Psoas muscle (tissue), 8 donors: ENCODE measurements at regions of chr3 and their contacts with region 1.

Region 1: GRCh38 chr3:59756934-59757333 is 707.1 kb upstream of the CFAP20DC start:
- DNase-seq: no peak
- ATAC-seq: no peak
- H3K4me3 ChIP-seq: no peak overlapping the region
- H3K27ac ChIP-seq: no peak overlapping the region
- H3K4me1 ChIP-seq: no peaks in the 10 kb centered on the region
- H3K27me3 ChIP-seq: no peaks in the 10 kb centered on the region
- CTCF ChIP-seq: no peak

Region 2: DNA sequence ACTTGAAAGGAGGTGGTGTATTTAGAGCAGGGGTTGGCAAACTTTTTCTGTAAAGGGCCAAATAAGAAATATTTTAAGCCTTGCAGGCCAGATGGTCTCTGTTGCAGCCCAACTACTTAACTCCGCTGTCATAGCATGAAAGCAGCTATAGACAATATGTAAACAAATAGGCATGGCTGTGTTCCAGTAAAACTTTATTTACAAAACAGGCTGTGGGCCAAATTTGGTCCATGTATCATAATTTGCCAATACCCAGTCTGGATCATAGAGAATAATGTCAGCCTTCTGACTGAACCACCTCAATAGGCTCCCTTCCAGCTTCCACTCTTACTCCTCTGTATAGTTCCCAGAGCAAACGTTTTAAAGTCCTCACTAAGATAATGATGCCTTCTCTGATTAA is 68.3 kb before region 1 on chr3:
- intact Hi-C with region 1: no loop called
- DNase-seq: no peak
- ATAC-seq: no peak
- H3K4me3 ChIP-seq: no peak overlapping the region
- H3K27ac ChIP-seq: no peak overlapping the region
- H3K4me1 ChIP-seq: no peaks in the 10 kb centered on the region
- H3K27me3 ChIP-seq: no peaks in the 10 kb centered on the region
- CTCF ChIP-seq: no peak

Region 3: GRCh38 chr3:59774634-59775033 is 17.7 kb after region 1 on chr3:
- intact Hi-C with region 1: loop called in 1 of 2 experiments (anchors 1 kb)
- DNase-seq: no peak
- ATAC-seq: no peak
- H3K4me3 ChIP-seq: no peak overlapping the region
- H3K27ac ChIP-seq: no peak overlapping the region
- H3K4me1 ChIP-seq: no peaks in the 10 kb centered on the region
- H3K27me3 ChIP-seq: no peaks in the 10 kb centered on the region
- CTCF ChIP-seq: no peak

Region 4: GRCh38 chr3:59873576-59874230 is 116.8 kb after region 1 on chr3:
- intact Hi-C with region 1: no loop called
- DNase-seq: no peak
- ATAC-seq: no peak
- H3K4me3 ChIP-seq: no peak overlapping the region
- H3K27ac ChIP-seq: no peak overlapping the region
- H3K4me1 ChIP-seq: no peaks in the 10 kb centered on the region
- H3K27me3 ChIP-seq: no peaks in the 10 kb centered on the region
- CTCF ChIP-seq: no peak

Region 5: GRCh38 chr3:60053526-60054265 is 296.8 kb after region 1 on chr3:
- intact Hi-C with region 1: no loop called
- DNase-seq: no peak
- ATAC-seq: no peak
- H3K4me3 ChIP-seq: no peak overlapping the region
- H3K27ac ChIP-seq: no peak overlapping the region
- H3K4me1 ChIP-seq: peaks cover 6% of the 10 kb centered on the region
- H3K27me3 ChIP-seq: no peaks in the 10 kb centered on the region
- CTCF ChIP-seq: no peak